Ascending aorta (tissue), 2 donors: ENCODE measurements at regions of chr6 and their contacts with region 1.

Region 1: GRCh38 chr6:149565527-149566409 is at the start of gene GINM1:
- DNase-seq: peak; percentile 70 to 96
- H3K4me3 ChIP-seq: peak within 1 kb of the TSS; percentile 81 to 100
- H3K27ac ChIP-seq: peak within 1 kb of the TSS; percentile 92 to 98
- H3K4me1 ChIP-seq: peaks cover 0 to 12% of the 10 kb centered on the region in 2 donors
- H3K27me3 ChIP-seq: no peaks in the 10 kb centered on the region
- CTCF ChIP-seq: peak; percentile 38 to 53 (median 43)
- total RNA-seq, gene GINM1: 36.4 TPM

Region 2: GRCh38 chr6:149545754-149546528 is 19.8 kb before region 1 on chr6 and contains the start of gene PPIL4:
- intact Hi-C with region 1: loop called (anchors 1 kb)
- DNase-seq: peak; percentile 87 to 98
- H3K4me3 ChIP-seq: peak within 1 kb of the TSS; percentile 72 to 84
- H3K27ac ChIP-seq: peak within 1 kb of the TSS; percentile 88 to 98
- H3K4me1 ChIP-seq: peaks cover 4 to 25% of the 10 kb centered on the region in 2 donors
- H3K27me3 ChIP-seq: no peaks in the 10 kb centered on the region
- CTCF ChIP-seq: peak; percentile 61 to 70 (median 70)
- total RNA-seq, gene PPIL4: 8.9 TPM

Region 3: GRCh38 chr6:149614337-149614736 is 48.6 kb after region 1 on chr6:
- intact Hi-C with region 1: no loop called
- DNase-seq: no peak
- H3K4me3 ChIP-seq: no peak overlapping the region
- H3K27ac ChIP-seq: no peak overlapping the region
- H3K4me1 ChIP-seq: no peaks in the 10 kb centered on the region
- H3K27me3 ChIP-seq: no peaks in the 10 kb centered on the region
- CTCF ChIP-seq: no peak

Region 4: GRCh38 chr6:149648148-149649145 is 82.7 kb after region 1 on chr6 and contains the start of gene KATNA1:
- intact Hi-C with region 1: loop called (anchors 5 kb)
- DNase-seq: peak; percentile 14 to 90
- H3K4me3 ChIP-seq: peak within 1 kb of the TSS; percentile 78 to 92
- H3K27ac ChIP-seq: peak within 1 kb of the TSS; percentile 64 to 89
- H3K4me1 ChIP-seq: peaks cover 0 to 7% of the 10 kb centered on the region in 2 donors
- H3K27me3 ChIP-seq: no peaks in the 10 kb centered on the region
- CTCF ChIP-seq: no peak
- total RNA-seq, gene KATNA1: 0.64 TPM